H1 (cell line): ENCODE measurements at regions of chr7 and their contacts with region 1.

Region 1: DNA sequence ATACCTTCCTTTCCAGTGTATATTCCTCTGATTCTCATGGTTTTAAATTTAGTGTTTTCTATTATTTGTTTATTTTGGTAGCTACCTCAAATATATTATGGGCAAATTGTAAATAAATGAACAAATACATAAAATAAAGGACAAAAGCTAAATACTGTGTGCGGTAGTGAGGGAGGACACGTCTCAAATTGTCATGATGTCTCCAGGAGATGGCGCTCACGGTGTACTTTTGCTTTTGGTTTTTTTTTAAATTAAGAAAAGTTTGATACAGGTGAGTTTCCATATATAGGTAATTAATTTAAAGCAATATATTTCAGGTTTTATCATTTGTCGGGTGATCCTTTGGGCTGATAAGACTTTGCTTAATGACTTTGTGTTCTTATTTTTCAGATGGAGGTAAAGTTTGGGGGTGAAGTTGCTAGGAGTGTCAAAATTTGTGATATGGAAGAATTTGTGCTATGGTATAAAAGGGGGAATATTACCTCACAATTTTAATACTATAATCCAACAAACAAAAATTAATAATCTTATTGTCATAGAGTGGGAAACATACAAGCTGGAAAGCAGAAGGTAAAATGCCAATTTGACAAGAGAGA is 68.4 kb upstream of the TMEM229A start:
- DNase-seq: no peak
- H3K4me3 ChIP-seq: no peak overlapping the region
- H3K27ac ChIP-seq: no peak overlapping the region
- H3K4me1 ChIP-seq: no peaks in the 10 kb centered on the region
- H3K27me3 ChIP-seq: no peaks in the 10 kb centered on the region
- CTCF ChIP-seq: peak; percentile 26 to 52 (median 46); a peak in 3 of 4 replicates
- EP300 ChIP-seq: no peak
- POLR2A ChIP-seq: no peak
- RAD21 ChIP-seq: peak; percentile 73 to 74

Region 2: GRCh38 chr7:124085179-124085578 is 16.1 kb before region 1 on chr7:
- CTCF ChIA-PET with region 1: interaction called, 11 read pairs
- POLR2A ChIA-PET with region 1: no interaction called
- DNase-seq: no peak
- H3K4me3 ChIP-seq: no peak overlapping the region
- H3K27ac ChIP-seq: no peak overlapping the region
- H3K4me1 ChIP-seq: no peaks in the 10 kb centered on the region
- H3K27me3 ChIP-seq: no peaks in the 10 kb centered on the region
- CTCF ChIP-seq: no peak
- EP300 ChIP-seq: no peak
- POLR2A ChIP-seq: no peak
- RAD21 ChIP-seq: no peak

Region 3: DNA sequence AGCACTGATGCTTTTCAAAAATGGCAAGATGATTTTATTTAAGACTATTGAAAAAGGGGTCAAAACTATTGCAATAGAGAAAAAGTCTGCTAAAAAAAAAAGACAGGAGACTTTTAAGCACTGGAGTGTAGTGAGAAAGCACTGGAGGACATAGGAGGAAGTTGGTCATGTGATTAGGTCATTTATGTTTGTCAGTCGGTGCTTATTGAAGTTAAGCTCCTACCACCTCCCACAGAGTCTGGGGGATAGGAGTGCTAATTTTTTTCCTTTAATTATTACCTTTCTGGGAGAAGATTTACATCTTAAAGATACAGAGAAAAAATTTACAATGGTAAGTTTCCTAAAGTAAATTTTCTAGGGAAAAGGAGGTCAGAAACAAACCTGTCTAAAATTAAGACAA is 11.8 kb after region 1 on chr7:
- CTCF ChIA-PET with region 1: interaction called, 25 read pairs
- POLR2A ChIA-PET with region 1: no interaction called
- DNase-seq: no peak
- H3K4me3 ChIP-seq: no peak overlapping the region
- H3K27ac ChIP-seq: no peak overlapping the region
- H3K4me1 ChIP-seq: no peaks in the 10 kb centered on the region; a peak in 1 of 7 replicates
- H3K27me3 ChIP-seq: no peaks in the 10 kb centered on the region
- CTCF ChIP-seq: no peak
- EP300 ChIP-seq: no peak
- POLR2A ChIP-seq: no peak
- RAD21 ChIP-seq: no peak

Region 4: GRCh38 chr7:124784879-124785818 is 683.9 kb after region 1 on chr7:
- CTCF ChIA-PET with region 1: interaction called, 18 read pairs
- POLR2A ChIA-PET with region 1: no interaction called
- DNase-seq: peak in 1 of 2 experiments; percentile 39
- H3K4me3 ChIP-seq: no peak overlapping the region
- H3K27ac ChIP-seq: no peak overlapping the region
- H3K4me1 ChIP-seq: peaks cover 0 to 8% (median 3%) of the 10 kb centered on the region in 4 experiments; a peak in 5 of 7 replicates
- H3K27me3 ChIP-seq: no peaks in the 10 kb centered on the region
- CTCF ChIP-seq: peak; percentile 44 to 88 (median 83)
- EP300 ChIP-seq: no peak
- POLR2A ChIP-seq: no peak
- RAD21 ChIP-seq: peak; percentile 98 to 100